Mammary epithelial cell (primary cell): ENCODE measurements at regions of chr5 and their contacts with region 1.

Region 1: DNA sequence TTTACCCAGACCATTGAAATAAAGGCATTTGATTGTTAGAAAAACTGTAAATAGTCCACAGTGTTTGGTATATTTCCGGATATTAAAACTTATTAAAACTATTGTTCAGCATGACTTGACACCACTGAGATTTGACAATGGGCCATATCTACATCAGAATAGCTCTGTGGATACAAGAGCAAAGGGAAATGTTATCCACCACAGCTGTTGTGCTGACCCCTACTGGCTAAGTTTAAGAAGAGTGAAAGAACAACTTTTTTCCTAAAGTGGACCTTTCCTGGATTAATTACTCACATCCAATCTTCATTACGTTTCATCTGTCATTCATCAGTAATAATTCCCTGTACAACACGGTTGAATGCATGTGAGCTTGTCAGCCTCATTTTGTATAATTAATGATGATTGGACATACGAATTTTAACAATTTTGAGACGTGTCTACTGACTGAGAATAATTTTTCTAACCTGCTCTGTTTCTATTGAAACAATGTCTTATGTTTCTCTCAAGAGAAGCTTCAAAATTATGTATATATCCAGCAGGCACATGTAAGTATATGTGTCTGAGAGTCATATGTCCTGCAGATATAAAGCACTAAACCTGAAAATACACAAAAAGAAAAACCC is 1952.6 kb downstream of the MAT2B start:
- DNase-seq: peak; percentile 33
- H3K4me3 ChIP-seq: no peak overlapping the region
- H3K27ac ChIP-seq: no peak overlapping the region
- H3K4me1 ChIP-seq: no peaks in the 10 kb centered on the region
- H3K27me3 ChIP-seq: no peaks in the 10 kb centered on the region
- CTCF ChIP-seq: peak; percentile 73 to 77

Region 2: DNA sequence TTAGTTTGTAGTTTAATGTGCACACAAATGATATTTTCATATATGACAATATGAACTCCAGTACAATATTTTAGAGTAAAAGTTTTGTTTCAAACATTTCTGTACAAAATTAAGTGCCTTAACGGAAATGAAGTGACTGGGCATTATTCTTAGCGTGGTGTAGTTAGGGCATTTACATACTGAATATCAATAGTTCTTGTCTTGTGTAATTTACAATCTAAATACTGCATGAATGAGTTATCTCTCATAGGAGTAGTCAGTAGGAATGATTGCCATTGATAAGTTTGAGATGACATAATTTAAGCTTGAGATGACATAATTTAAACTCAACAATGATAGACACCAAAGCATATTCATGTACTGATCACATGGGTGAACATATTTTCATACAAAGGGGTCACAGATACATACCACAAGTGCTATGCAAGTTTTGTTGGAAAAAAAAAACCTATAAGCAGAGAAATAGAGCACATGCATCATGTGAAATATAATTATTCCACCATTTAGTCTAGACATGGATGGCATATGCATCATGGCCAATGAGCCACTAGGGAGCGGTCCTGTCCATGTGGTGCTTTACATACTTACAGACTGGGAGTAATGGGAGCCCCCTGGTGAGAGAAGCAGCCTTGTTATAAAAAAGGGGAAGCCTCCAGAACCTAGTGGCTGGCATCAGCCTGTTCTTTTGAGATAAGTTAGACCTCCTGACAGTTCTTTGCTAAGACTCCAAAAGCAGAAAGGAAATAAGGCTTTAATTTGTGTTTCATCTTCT is 428.7 kb before region 1 on chr5:
- CTCF ChIA-PET with region 1: no interaction called
- dilution Hi-C with region 1: no loop called
- in situ Hi-C with region 1: no loop called
- intact Hi-C with region 1: loop called (anchors 10 kb)
- DNase-seq: no peak
- H3K4me3 ChIP-seq: no peak overlapping the region
- H3K27ac ChIP-seq: no peak overlapping the region
- H3K4me1 ChIP-seq: no peaks in the 10 kb centered on the region
- H3K27me3 ChIP-seq: no peaks in the 10 kb centered on the region
- CTCF ChIP-seq: peak; percentile 14 to 43

Region 3: GRCh38 chr5:165227511-165227910 is 230.5 kb before region 1 on chr5:
- CTCF ChIA-PET with region 1: no interaction called
- dilution Hi-C with region 1: no loop called
- in situ Hi-C with region 1: no loop called
- intact Hi-C with region 1: loop called (anchors 1 kb)
- DNase-seq: no peak
- H3K4me3 ChIP-seq: no peak overlapping the region
- H3K27ac ChIP-seq: no peak overlapping the region
- H3K4me1 ChIP-seq: no peaks in the 10 kb centered on the region
- H3K27me3 ChIP-seq: peaks cover 2% of the 10 kb centered on the region
- CTCF ChIP-seq: peak; percentile 6 to 42